ENCODE measurements at regions of chr6 and their contacts with region 1.

Region 1: DNA sequence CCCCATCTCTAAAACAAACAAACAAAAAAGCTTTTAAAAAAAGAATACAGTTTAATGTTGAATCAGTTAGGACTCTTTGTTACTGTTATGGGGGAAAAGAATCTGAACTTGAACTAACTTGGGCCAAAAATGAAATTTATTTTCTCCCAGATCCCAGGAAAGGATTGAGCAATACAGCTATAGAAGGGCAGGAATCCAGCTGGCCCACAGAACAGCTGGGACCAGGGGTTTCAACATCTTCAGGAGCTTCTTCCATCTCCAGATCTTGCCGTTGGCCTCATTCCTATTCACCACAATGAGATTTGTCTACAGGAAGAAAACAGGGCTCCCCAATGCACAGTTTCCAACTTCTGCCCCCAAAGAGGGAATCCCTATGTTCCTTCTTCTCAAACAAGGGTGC is 43.2 kb upstream of the AKAP12 start:
- DNase-seq: no peak
- ATAC-seq: no peak
- H3K4me3 Mint-ChIP-seq: no peak overlapping the region
- H3K27ac Mint-ChIP-seq: no peak overlapping the region
- H3K4me1 Mint-ChIP-seq: no peaks in the 10 kb centered on the region
- H3K27me3 Mint-ChIP-seq: peaks cover 2% of the 10 kb centered on the region

Region 2: GRCh38 chr6:151160929-151161757 is 35.4 kb before region 1 on chr6:
- CTCF ChIA-PET with region 1: no interaction called
- POLR2A ChIA-PET with region 1: interaction called, 21 read pairs
- intact Hi-C with region 1: no loop called
- DNase-seq: no peak
- ATAC-seq: no peak
- H3K4me3 Mint-ChIP-seq: no peak overlapping the region
- H3K27ac Mint-ChIP-seq: no peak overlapping the region
- H3K4me1 Mint-ChIP-seq: no peaks in the 10 kb centered on the region
- H3K27me3 Mint-ChIP-seq: peaks cover 10% of the 10 kb centered on the region

Region 3: GRCh38 chr6:151179321-151179720 is 17.2 kb before region 1 on chr6:
- CTCF ChIA-PET with region 1: no interaction called
- POLR2A ChIA-PET with region 1: no interaction called
- intact Hi-C with region 1: no loop called
- DNase-seq: no peak
- ATAC-seq: no peak
- H3K4me3 Mint-ChIP-seq: no peak overlapping the region
- H3K27ac Mint-ChIP-seq: no peak overlapping the region
- H3K4me1 Mint-ChIP-seq: no peaks in the 10 kb centered on the region
- H3K27me3 Mint-ChIP-seq: peaks cover 19% of the 10 kb centered on the region

Region 4: DNA sequence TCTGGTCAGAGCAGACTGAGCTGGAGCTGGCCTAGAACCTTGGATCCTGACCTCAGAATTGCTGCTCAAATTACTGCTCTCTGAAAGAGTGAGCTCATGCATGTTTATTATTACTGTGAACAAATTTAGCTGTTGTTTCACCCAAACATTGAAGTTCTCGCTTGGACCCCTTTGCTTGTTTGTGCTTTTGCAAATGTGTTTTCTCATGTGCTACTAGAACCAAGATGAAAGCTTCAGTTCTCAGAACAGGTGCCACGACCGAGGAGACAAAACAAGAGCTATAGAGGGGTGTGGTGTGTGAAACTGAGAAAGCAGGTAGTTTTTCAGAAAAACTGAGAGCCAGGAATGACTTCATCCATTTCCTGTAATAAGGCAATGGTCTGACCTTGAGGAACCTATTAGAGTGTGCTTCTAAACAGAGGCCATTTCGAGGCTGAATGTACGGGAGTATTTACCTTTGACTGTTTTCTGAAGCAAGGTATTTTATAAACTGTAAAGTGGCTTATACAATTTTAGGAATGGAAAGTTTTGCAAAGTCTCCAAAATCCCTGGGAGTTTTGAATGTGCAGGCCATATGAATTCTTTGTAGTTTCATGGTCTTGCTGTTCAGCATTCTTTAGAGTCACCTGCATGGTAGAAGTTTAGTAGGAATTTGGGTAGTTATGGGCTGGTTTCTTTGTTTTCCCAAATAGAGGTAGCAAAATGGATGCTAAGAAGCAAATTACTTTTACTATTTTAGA is 561.1 kb after region 1 on chr6:
- CTCF ChIA-PET with region 1: no interaction called
- POLR2A ChIA-PET with region 1: no interaction called
- intact Hi-C with region 1: no loop called
- DNase-seq: peak; percentile 62
- ATAC-seq: peak; percentile 90
- H3K4me3 Mint-ChIP-seq: no peak overlapping the region
- H3K27ac Mint-ChIP-seq: peak overlapping the region; percentile 82
- H3K4me1 Mint-ChIP-seq: peaks cover 25% of the 10 kb centered on the region
- H3K27me3 Mint-ChIP-seq: peaks cover 2% of the 10 kb centered on the region